ENCODE measurements at regions of chr3 and their contacts with region 1.

Region 1: DNA sequence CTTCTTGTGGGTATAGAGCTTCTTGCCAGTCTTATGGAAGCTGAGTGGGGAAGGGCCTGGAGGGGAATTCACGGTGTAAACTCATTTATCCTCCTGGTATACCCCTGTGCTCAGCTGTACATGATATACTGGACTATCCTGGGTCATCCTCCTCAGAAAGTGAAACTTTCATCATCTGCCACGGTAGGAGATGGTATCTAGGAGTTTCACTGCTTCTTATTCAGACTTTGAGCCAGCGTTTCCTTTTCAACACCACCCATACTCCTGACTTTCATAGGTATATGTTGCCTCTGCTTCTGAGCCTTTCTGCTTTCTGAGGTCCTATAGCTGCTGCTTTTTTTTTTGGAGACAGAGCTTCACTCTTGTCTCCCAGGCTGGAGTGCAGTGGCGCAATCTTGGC is 15.6 kb downstream of the SENP5 start:
- DNase-seq: no peak
- H3K4me3 ChIP-seq: no peak overlapping the region
- H3K27ac ChIP-seq: no peak overlapping the region
- H3K4me1 ChIP-seq: no peaks in the 10 kb centered on the region
- H3K27me3 ChIP-seq: no peaks in the 10 kb centered on the region
- CTCF ChIP-seq: no peak

Region 2: DNA sequence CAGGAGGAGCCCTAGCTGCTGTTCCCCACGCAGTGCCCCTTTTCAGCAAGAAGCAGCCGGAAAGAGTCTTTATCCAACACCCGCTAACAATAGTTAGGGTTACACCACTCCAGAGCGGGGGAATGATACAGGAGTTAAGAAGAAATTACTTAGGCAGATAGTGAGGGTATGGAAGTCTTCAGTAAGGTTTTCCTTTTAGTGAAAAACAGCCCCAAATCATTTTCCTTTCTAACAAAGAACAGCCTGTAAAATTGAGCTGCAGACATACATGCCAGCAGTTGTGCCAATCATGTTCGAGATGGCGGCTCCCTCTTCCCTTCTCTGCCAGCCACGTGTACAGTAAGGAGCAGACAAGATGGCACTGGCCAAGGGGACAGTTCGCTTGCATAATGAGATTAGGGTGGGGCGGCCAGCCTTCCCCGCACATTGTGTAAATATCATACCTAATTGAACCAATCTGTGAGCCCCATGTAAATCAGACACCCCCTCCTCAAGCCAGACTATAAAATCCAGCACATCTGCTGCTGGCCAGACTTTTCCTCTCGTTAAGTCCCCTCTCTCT is 34.1 kb before region 1 on chr3:
- CTCF ChIA-PET with region 1: no interaction called
- dilution Hi-C with region 1: no loop called
- in situ Hi-C with region 1: no loop called
- intact Hi-C with region 1: loop called (anchors 2 kb)
- DNase-seq: no peak
- H3K4me3 ChIP-seq: no peak overlapping the region
- H3K27ac ChIP-seq: no peak overlapping the region
- H3K4me1 ChIP-seq: no peaks in the 10 kb centered on the region
- H3K27me3 ChIP-seq: no peaks in the 10 kb centered on the region
- CTCF ChIP-seq: no peak

Measured in mammary epithelial cell (primary cell).